Activated B cell treated with CpG ODN at 0.5 μM for 24 hours (primary cell): ENCODE measurements at regions of chr2 and their contacts with region 1.

Region 1: DNA sequence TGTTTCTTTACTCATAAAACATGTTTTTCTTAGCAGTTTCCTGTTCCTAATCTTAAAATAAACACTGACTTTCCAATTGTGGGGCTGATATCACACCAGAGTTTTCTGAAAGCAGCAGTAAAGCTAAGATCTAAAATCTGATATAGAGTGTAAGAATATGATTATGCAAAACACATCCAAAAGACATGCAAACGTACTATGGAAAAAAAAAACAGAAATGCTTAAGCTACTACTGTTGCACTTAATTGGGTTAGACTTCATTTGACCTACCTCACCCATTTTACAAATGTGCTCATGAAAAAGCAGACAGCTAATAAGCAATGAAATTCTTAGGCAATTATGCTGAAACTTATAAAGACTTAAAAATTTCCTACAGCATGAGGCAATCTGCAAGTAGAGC is 10.5 kb downstream of the CYTIP start:
- DNase-seq: no peak
- ATAC-seq: no peak
- H3K4me3 Mint-ChIP-seq: peak overlapping the region; percentile 57
- H3K27ac Mint-ChIP-seq: peak overlapping the region; percentile 61
- H3K4me1 Mint-ChIP-seq: peaks cover 86% of the 10 kb centered on the region
- H3K27me3 Mint-ChIP-seq: no peaks in the 10 kb centered on the region
- CTCF ChIP-seq: no peak

Region 2: DNA sequence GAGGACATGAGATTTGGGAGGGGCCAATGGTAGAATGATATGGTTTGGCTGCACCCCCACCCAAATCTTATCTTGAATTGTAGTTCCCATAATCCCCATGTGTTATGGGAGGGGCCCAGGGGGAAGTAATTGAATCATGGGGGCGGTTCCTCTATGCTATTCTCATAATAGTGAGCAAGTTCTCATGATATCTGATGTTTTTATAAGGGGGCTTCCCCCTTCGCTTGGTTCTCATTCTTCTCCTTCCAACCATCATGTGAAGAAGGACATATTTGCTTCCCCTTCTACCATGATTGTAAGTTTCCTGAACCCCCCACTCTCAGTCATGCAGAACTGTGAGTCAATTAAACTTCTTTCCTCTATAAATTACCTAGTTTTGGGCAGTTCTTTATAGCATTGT is 70.8 kb before region 1 on chr2:
- CTCF ChIA-PET with region 1: no interaction called
- POLR2A ChIA-PET with region 1: no interaction called
- intact Hi-C with region 1: no loop called
- DNase-seq: no peak
- ATAC-seq: no peak
- H3K4me3 Mint-ChIP-seq: no peak overlapping the region
- H3K27ac Mint-ChIP-seq: no peak overlapping the region
- H3K4me1 Mint-ChIP-seq: peaks cover 36% of the 10 kb centered on the region
- H3K27me3 Mint-ChIP-seq: no peaks in the 10 kb centered on the region
- CTCF ChIP-seq: no peak

Region 3: DNA sequence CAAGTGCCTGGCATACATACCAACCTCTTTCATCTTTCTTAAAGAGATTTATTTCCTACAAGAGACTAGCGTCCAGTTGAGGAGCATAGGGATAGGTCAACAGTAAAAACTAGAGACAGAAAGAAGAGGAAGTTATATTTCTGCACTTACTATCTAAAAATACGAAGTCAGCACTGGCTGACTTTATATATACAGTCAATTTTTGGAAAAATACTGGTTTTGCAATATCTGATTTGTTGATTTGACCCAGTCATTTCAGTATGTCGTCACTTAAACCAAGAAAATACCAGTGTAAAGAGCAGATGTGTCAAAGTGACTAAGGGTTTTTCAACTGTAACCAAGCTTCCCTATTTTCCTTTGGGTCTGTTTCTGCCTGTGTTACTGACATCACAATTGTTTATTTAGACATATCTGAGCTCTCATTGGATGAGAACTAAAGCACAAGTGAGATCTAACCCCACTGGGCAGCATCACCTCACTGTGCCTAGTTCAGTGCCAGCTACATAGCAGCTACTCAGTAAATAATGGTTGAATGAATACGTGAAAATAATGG is 12.5 kb before region 1 on chr2:
- CTCF ChIA-PET with region 1: interaction called, 4 read pairs
- POLR2A ChIA-PET with region 1: interaction called, 185 read pairs
- intact Hi-C with region 1: loop called (anchors 1 kb)
- DNase-seq: no peak
- ATAC-seq: peak; percentile 73
- H3K4me3 Mint-ChIP-seq: peak overlapping the region; percentile 63
- H3K27ac Mint-ChIP-seq: peak overlapping the region; percentile 90
- H3K4me1 Mint-ChIP-seq: peaks cover 58% of the 10 kb centered on the region
- H3K27me3 Mint-ChIP-seq: no peaks in the 10 kb centered on the region
- CTCF ChIP-seq: no peak